ENCODE measurements at regions of chr11 and their contacts with region 1.

Region 1: GRCh38 chr11:47152953-47153950 is 23.4 kb downstream of the ARFGAP2 start:
- DNase-seq: peak; percentile 67
- ATAC-seq: peak; percentile 61
- H3K4me3 ChIP-seq: no peak overlapping the region
- H3K4me3 Mint-ChIP-seq: peak overlapping the region; percentile 14
- H3K27ac ChIP-seq: no peak overlapping the region
- H3K27ac Mint-ChIP-seq: no peak overlapping the region
- H3K4me1 ChIP-seq: peaks cover 19 to 36% of the 10 kb centered on the region in 2 donors
- H3K4me1 Mint-ChIP-seq: peaks cover 35% of the 10 kb centered on the region
- H3K27me3 ChIP-seq: no peaks in the 10 kb centered on the region
- H3K27me3 Mint-ChIP-seq: no peaks in the 10 kb centered on the region
- CTCF ChIP-seq: peak; percentile 84

Region 2: GRCh38 chr11:46896719-46897406 is 256.4 kb before region 1 on chr11:
- CTCF ChIA-PET with region 1: interaction called, 32 read pairs
- POLR2A ChIA-PET with region 1: interaction called, 7 read pairs
- intact Hi-C with region 1: no loop called
- DNase-seq: no peak
- ATAC-seq: no peak
- H3K4me3 ChIP-seq: no peak overlapping the region
- H3K4me3 Mint-ChIP-seq: no peak overlapping the region
- H3K27ac ChIP-seq: no peak overlapping the region
- H3K27ac Mint-ChIP-seq: no peak overlapping the region
- H3K4me1 ChIP-seq: no peaks in the 10 kb centered on the region
- H3K4me1 Mint-ChIP-seq: no peaks in the 10 kb centered on the region
- H3K27me3 ChIP-seq: no peaks in the 10 kb centered on the region
- H3K27me3 Mint-ChIP-seq: peaks cover 6% of the 10 kb centered on the region
- CTCF ChIP-seq: no peak

Region 3: GRCh38 chr11:46966773-46967172 is 186.5 kb before region 1 on chr11:
- CTCF ChIA-PET with region 1: no interaction called
- POLR2A ChIA-PET with region 1: no interaction called
- intact Hi-C with region 1: no loop called
- DNase-seq: no peak
- ATAC-seq: no peak
- H3K4me3 ChIP-seq: no peak overlapping the region
- H3K4me3 Mint-ChIP-seq: no peak overlapping the region
- H3K27ac ChIP-seq: no peak overlapping the region
- H3K27ac Mint-ChIP-seq: no peak overlapping the region
- H3K4me1 ChIP-seq: no peaks in the 10 kb centered on the region
- H3K4me1 Mint-ChIP-seq: no peaks in the 10 kb centered on the region
- H3K27me3 ChIP-seq: no peaks in the 10 kb centered on the region
- H3K27me3 Mint-ChIP-seq: no peaks in the 10 kb centered on the region
- CTCF ChIP-seq: no peak

Region 4: GRCh38 chr11:47464483-47464882 is 311.2 kb after region 1 on chr11:
- CTCF ChIA-PET with region 1: no interaction called
- POLR2A ChIA-PET with region 1: no interaction called
- intact Hi-C with region 1: no loop called
- DNase-seq: no peak
- ATAC-seq: no peak
- H3K4me3 ChIP-seq: no peak overlapping the region
- H3K4me3 Mint-ChIP-seq: no peak overlapping the region
- H3K27ac ChIP-seq: no peak overlapping the region
- H3K27ac Mint-ChIP-seq: peak overlapping the region; percentile 56
- H3K4me1 ChIP-seq: no peaks in the 10 kb centered on the region
- H3K4me1 Mint-ChIP-seq: no peaks in the 10 kb centered on the region
- H3K27me3 ChIP-seq: no peaks in the 10 kb centered on the region
- H3K27me3 Mint-ChIP-seq: no peaks in the 10 kb centered on the region
- CTCF ChIP-seq: no peak